Heart right ventricle (tissue), 16 donors: ENCODE measurements at regions of chr12 and their contacts with region 1.

Region 1: GRCh38 chr12:116697305-116697704 is 40.6 kb downstream of the SPRING1 start:
- DNase-seq: no peak
- ATAC-seq: peak in 7 of 8 donors; percentile 19 to 61 (median 46)
- H3K4me3 ChIP-seq: no peak overlapping the region
- H3K27ac ChIP-seq: no peak overlapping the region
- H3K4me1 ChIP-seq: peaks cover 5 to 42% (median 28%) of the 10 kb centered on the region in 9 donors
- H3K27me3 ChIP-seq: peaks cover 0 to 22% (median 14%) of the 10 kb centered on the region in 7 donors
- CTCF ChIP-seq: peak in 6 of 9 donors; percentile 28 to 51 (median 34)

Region 2: GRCh38 chr12:116015525-116015924 is 681.8 kb before region 1 on chr12:
- intact Hi-C with region 1: loop called in 2 of 10 experiments (anchors 10 kb)
- DNase-seq: no peak
- ATAC-seq: peak in 7 of 8 donors; percentile 47 to 88 (median 81)
- H3K4me3 ChIP-seq: no peak overlapping the region
- H3K27ac ChIP-seq: no peak overlapping the region
- H3K4me1 ChIP-seq: peaks cover 0 to 39% (median 11%) of the 10 kb centered on the region in 9 donors
- H3K27me3 ChIP-seq: no peaks in the 10 kb centered on the region
- CTCF ChIP-seq: peak; percentile 20 to 82 (median 60)

Region 3: GRCh38 chr12:116142936-116143898 is 554.1 kb before region 1 on chr12:
- intact Hi-C with region 1: loop called in 2 of 10 experiments (anchors 5 to 10 kb)
- DNase-seq: no peak
- ATAC-seq: peak in 3 of 8 donors; percentile 21 to 43 (median 40)
- H3K4me3 ChIP-seq: no peak overlapping the region
- H3K27ac ChIP-seq: peak overlapping the region in 8 of 10 donors; percentile 5 to 59 (median 34)
- H3K4me1 ChIP-seq: peaks cover 0 to 89% (median 66%) of the 10 kb centered on the region in 9 donors
- H3K27me3 ChIP-seq: no peaks in the 10 kb centered on the region
- CTCF ChIP-seq: no peak

Region 4: DNA sequence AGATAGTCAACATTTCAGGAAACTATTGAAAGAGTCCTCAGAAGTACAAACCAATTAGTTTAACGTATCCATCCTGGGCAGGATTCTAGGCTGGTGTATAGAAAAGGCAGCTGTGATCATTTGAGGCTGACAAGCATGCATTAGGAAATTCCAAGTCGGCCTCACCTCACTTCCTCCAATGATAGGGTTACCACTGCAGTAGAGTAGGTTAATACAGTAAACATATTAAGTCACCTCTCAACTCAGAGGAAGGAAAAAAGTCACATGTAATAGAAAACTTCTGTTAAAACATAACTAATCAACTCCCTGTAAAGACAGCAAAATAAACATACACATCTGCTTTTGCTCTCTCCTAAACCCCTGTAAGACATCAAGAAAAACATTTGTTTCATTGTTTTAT is 453.3 kb before region 1 on chr12:
- intact Hi-C with region 1: loop called in 1 of 10 experiments (anchors 10 kb)
- DNase-seq: no peak
- ATAC-seq: peak in 4 of 8 donors; percentile 22 to 41 (median 38)
- H3K4me3 ChIP-seq: no peak overlapping the region
- H3K27ac ChIP-seq: peak overlapping the region in 1 of 10 donors; percentile 28
- H3K4me1 ChIP-seq: peaks cover 7 to 89% (median 77%) of the 10 kb centered on the region in 9 donors
- H3K27me3 ChIP-seq: no peaks in the 10 kb centered on the region
- CTCF ChIP-seq: no peak

Region 5: DNA sequence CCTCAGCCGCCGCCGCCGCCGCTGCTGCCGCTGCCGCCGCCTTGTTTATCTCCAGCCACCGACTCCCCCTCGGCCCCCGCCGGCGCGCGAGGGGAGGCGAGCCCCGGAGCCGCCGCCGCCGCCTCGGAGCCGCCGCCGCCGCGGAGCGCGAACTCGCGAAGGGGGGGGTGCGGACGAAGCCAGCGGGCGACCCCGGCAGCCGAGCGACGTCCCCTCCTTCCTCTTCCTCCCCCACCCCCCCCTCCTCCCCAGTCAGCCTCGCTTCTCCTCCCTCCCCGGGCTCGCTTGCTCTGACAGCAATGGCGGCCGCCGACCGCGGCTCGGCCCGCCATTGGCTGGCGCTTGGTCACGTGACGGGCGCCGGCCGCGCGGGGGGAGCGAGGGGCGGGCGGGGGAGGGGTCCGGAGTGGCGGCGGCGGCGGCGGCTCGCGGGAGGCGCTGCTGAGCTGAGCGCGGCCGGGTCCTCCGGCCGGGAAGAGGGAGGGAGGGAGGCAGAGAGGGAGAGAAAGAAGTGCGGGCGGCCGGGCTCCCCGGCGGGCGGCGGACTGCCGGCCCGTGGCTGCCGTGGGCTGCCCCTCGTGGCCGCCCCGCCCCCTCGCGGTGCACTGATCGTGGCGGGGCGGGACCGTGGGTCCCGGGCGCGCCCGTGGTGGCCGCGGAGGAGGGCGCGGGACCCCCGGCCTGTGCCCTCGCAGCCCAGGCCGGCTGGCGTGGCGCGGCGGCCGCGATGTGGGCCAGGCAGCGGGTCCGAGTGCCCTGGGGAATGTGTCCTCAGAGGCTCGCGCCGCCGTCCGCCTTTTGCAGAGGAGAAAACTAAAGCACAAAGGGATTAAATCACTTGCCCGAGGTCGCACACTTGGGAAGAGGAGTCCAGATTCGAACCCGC is 419.7 kb before region 1 on chr12 and contains the start of gene MED13L:
- intact Hi-C with region 1: loop called in 2 of 10 experiments (anchors 5 to 10 kb)
- DNase-seq: peak; percentile 87 to 91
- ATAC-seq: peak; percentile 90 to 96 (median 94)
- H3K4me3 ChIP-seq: peak within 1 kb of the TSS; percentile 77 to 96 (median 88)
- H3K27ac ChIP-seq: peak within 1 kb of the TSS; percentile 89 to 100 (median 95)
- H3K4me1 ChIP-seq: peaks cover 0 to 56% (median 29%) of the 10 kb centered on the region in 9 donors
- H3K27me3 ChIP-seq: no peaks in the 10 kb centered on the region
- CTCF ChIP-seq: peak in 7 of 9 donors; percentile 15 to 73 (median 52)
- total RNA-seq, gene MED13L: 53.8 to 76.5 (median 67.0) TPM

Region 6: GRCh38 chr12:116455540-116456329 is 241.6 kb before region 1 on chr12:
- intact Hi-C with region 1: loop called in 1 of 10 experiments (anchors 10 kb)
- DNase-seq: peak; percentile 49 to 89
- ATAC-seq: peak; percentile 88 to 95 (median 93)
- H3K4me3 ChIP-seq: peak overlapping the region in 5 of 10 donors; percentile 0 to 18 (median 11)
- H3K27ac ChIP-seq: peak overlapping the region; percentile 51 to 89 (median 82)
- H3K4me1 ChIP-seq: peaks cover 11 to 24% (median 23%) of the 10 kb centered on the region in 9 donors
- H3K27me3 ChIP-seq: peaks cover 0 to 3% (median 0%) of the 10 kb centered on the region in 7 donors
- CTCF ChIP-seq: no peak

Region 7: DNA sequence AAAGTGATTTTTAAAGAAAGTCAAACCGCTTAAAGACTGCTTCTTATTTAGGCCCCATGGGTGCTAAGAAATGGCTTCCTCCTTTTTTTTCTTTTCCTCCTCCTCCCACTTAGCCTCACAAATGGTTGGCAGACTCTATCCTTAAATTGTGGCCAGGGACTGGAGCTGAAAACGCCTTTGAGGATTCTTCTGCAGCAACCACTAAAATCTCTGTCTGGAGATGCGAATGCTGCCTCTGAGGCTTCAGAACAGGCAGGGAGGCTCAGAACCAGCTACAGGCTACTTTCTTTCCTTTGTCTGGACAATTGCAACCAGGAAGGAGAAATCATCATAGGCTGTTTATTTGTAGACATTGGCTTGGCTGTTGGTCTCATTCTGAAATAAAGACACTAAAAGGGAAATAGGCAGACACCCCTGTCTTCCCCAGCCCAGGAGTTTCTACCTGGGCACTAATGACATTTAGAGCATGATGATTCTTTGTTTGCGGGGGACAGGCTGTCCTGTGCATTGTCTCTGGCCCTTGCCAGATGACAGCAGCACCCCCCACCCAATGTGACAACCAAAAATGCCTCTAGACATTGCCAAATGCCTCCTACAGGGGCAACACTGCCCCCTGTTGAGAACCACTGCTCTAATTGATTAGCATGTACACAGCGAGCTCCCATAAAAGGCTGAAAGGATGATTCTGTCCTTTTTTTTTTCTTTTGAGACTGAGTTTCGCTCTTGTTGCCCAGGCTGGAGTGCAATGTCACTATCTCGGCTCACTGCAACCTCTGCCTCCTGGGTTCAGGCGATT is 87.8 kb before region 1 on chr12:
- intact Hi-C with region 1: loop called in 1 of 10 experiments (anchors 10 kb)
- DNase-seq: no peak
- ATAC-seq: peak in 3 of 8 donors; percentile 16 to 28 (median 20)
- H3K4me3 ChIP-seq: no peak overlapping the region
- H3K27ac ChIP-seq: peak overlapping the region in 5 of 10 donors; percentile 11 to 66 (median 19)
- H3K4me1 ChIP-seq: peaks cover 0 to 29% (median 16%) of the 10 kb centered on the region in 9 donors
- H3K27me3 ChIP-seq: peaks cover 0 to 10% (median 0%) of the 10 kb centered on the region in 7 donors
- CTCF ChIP-seq: peak in 7 of 9 donors; percentile 23 to 48 (median 38)